ENCODE measurements at regions of chr7 and their contacts with region 1.

Region 1: DNA sequence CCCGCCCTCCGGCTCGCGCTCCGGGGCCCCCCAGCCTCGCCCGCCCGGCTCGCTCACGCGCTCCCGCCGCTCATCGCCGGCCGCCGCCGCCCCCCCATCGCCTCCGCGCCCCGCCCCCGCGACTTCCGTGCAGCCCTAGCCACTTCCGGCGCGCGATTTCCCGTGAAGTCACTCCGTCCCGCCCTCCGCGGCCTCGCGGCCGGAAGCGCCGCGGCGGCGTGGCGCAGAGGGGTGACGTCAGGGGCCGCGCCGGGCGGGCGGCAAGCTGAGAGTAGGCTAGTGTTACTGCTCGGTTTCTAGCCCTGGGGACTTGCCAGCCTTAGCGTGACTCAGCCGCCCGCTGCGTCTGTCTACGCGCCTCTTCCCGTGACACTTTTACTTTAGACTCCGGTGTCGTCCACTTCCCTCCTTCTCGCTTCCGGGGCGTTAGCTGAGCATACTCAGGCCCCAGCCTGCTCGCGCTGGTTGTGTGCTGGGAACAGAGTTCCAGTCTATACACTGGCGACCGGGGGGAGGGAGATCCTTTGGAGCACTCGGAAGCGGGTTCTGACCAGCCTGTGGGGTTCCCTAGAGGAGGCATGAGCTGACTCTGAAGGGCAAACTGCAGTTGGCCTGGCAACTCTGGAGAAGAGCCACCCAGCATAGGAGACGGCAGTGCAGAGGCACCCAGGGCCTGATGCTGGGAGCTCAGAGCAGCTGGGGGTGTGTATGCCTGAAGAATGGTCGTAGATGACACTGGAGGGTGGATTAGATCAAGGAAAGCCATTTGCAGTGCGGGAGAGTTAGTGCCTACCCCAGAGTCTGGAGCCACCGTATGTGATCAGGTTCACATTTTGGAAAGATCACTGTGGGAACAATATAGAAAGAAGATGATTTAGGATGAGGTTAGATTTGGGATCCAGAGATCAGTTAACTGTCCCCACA is at the start of gene PURB:
- DNase-seq: peak; percentile 96
- ATAC-seq: peak; percentile 91
- H3K4me3 Mint-ChIP-seq: peak within 1 kb of the TSS; percentile 88
- H3K27ac Mint-ChIP-seq: peak within 1 kb of the TSS; percentile 98
- H3K4me1 Mint-ChIP-seq: peaks cover 57% of the 10 kb centered on the region
- H3K27me3 Mint-ChIP-seq: no peaks in the 10 kb centered on the region
- total RNA-seq, gene PURB: 26.8 to 28.0 TPM

Region 2: DNA sequence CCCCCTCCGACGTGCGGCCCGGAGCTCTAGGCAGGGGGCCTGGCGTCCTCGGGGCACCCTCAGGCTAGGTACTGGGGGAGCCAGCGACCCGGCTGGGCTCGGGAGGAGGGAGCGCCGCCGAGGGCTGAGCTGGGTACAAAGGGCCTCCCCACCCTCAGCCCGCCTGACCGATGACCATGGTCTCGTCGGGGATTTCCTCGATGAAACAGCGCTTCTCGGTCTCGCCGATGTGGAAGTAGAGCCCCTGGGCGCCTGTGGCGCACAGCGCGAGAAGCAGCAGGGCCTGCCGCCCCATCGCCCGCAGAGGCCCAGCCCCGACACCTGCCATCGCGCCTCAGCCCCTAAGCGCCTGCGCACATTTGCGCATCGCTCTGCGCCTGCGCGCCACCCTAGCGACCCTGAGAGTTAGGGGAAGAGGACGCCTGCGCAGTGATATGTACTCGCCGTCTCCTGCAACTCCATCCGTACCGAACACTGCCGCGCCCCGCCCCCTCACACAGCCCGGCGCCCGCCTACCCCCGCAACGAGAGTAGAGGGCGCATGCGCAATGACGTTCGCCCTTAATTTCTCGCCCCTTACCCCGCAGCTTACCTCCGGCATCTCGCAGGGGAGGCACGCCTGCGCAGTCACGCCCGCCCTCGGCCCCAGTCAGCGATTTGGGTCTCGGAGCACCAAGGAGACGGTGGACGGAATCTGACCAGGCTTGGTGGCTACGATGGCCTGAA is 303.6 kb before region 1 on chr7 and contains the start of gene TMED4:
- CTCF ChIA-PET with region 1: no interaction called
- POLR2A ChIA-PET with region 1: interaction called, 16 read pairs
- DNase-seq: peak; percentile 100
- ATAC-seq: peak; percentile 95
- H3K4me3 Mint-ChIP-seq: peak within 1 kb of the TSS; percentile 93
- H3K27ac Mint-ChIP-seq: peak within 1 kb of the TSS; percentile 91
- H3K4me1 Mint-ChIP-seq: peaks cover 38% of the 10 kb centered on the region
- H3K27me3 Mint-ChIP-seq: peaks cover 3% of the 10 kb centered on the region
- total RNA-seq, gene TMED4: 63.8 to 65.9 TPM

Region 3: DNA sequence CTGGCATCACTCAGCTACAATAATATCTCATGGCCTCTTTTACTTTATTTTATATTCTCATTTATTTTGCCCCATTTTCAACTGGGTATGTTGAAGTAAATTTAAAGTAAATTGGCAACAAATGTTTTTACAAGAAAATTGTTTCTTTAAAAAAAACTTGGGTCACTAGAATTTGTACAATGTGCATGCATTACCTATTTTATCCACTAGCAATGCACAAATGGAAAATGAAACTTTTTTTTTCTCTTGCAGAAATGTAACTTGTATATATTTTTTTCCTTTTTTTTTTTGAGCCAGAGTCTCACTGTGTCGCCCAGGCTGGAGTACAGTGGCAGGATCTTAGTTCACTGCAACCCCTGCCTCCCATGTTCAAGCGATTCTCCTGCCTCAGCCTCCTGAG is 27.5 kb before region 1 on chr7:
- CTCF ChIA-PET with region 1: interaction called, 58 read pairs
- POLR2A ChIA-PET with region 1: interaction called, 23 read pairs
- DNase-seq: no peak
- ATAC-seq: no peak
- H3K4me3 Mint-ChIP-seq: no peak overlapping the region
- H3K27ac Mint-ChIP-seq: no peak overlapping the region
- H3K4me1 Mint-ChIP-seq: peaks cover 13% of the 10 kb centered on the region
- H3K27me3 Mint-ChIP-seq: peaks cover 4% of the 10 kb centered on the region

Region 4: DNA sequence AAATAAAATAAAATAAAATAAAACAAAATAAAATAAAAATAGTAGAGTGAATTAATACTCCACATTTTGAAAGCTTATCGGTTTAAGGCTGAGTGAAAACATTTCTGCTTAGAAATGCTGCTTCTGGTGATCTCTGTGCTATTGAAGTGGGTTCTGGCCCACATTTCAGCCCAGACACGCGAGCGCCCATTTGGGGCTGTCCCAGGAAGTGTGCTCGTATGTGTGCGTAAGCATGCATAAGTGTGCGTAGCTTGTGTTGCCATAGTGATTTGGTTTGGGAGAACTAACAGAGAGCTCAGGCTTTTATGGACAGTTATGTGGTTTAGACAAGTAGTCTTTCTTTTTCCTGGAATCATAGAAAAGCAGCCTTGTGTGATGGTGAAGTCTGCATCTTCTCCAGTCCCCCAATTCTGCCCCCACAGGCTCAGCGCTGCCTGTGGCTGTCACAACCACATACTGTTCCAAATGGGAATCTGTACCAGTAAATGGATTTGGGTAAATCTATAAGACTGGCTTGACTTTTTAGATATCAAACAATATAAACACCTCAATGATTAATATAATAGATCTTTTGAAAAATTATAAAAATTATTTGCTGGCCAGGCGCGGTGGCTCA is 29.4 kb after region 1 on chr7:
- CTCF ChIA-PET with region 1: interaction called, 26 read pairs
- POLR2A ChIA-PET with region 1: interaction called, 35 read pairs
- DNase-seq: peak; percentile 85
- ATAC-seq: peak; percentile 92
- H3K4me3 Mint-ChIP-seq: peak overlapping the region; percentile 13
- H3K27ac Mint-ChIP-seq: peak overlapping the region; percentile 86
- H3K4me1 Mint-ChIP-seq: peaks cover 34% of the 10 kb centered on the region
- H3K27me3 Mint-ChIP-seq: no peaks in the 10 kb centered on the region

Region 5: GRCh38 chr7:44980393-44981034 is 94.9 kb after region 1 on chr7:
- CTCF ChIA-PET with region 1: no interaction called
- POLR2A ChIA-PET with region 1: interaction called, 12 read pairs
- DNase-seq: peak; percentile 76
- ATAC-seq: peak; percentile 11
- H3K4me3 Mint-ChIP-seq: peak overlapping the region; percentile 95
- H3K27ac Mint-ChIP-seq: peak overlapping the region; percentile 98
- H3K4me1 Mint-ChIP-seq: peaks cover 75% of the 10 kb centered on the region
- H3K27me3 Mint-ChIP-seq: no peaks in the 10 kb centered on the region

Region 6: GRCh38 chr7:45092100-45092928 is 206.7 kb after region 1 on chr7:
- CTCF ChIA-PET with region 1: no interaction called
- POLR2A ChIA-PET with region 1: no interaction called
- DNase-seq: no peak
- ATAC-seq: no peak
- H3K4me3 Mint-ChIP-seq: no peak overlapping the region
- H3K27ac Mint-ChIP-seq: no peak overlapping the region
- H3K4me1 Mint-ChIP-seq: peaks cover 9% of the 10 kb centered on the region
- H3K27me3 Mint-ChIP-seq: peaks cover 24% of the 10 kb centered on the region

Region 7: GRCh38 chr7:45456747-45457515 is 571.3 kb after region 1 on chr7:
- CTCF ChIA-PET with region 1: no interaction called
- POLR2A ChIA-PET with region 1: no interaction called
- DNase-seq: no peak
- ATAC-seq: no peak
- H3K4me3 Mint-ChIP-seq: no peak overlapping the region
- H3K27ac Mint-ChIP-seq: no peak overlapping the region
- H3K4me1 Mint-ChIP-seq: no peaks in the 10 kb centered on the region
- H3K27me3 Mint-ChIP-seq: peaks cover 2% of the 10 kb centered on the region